GM23248 (cell line): ENCODE measurements at regions of chr12 and their contacts with region 1.

Region 1: DNA sequence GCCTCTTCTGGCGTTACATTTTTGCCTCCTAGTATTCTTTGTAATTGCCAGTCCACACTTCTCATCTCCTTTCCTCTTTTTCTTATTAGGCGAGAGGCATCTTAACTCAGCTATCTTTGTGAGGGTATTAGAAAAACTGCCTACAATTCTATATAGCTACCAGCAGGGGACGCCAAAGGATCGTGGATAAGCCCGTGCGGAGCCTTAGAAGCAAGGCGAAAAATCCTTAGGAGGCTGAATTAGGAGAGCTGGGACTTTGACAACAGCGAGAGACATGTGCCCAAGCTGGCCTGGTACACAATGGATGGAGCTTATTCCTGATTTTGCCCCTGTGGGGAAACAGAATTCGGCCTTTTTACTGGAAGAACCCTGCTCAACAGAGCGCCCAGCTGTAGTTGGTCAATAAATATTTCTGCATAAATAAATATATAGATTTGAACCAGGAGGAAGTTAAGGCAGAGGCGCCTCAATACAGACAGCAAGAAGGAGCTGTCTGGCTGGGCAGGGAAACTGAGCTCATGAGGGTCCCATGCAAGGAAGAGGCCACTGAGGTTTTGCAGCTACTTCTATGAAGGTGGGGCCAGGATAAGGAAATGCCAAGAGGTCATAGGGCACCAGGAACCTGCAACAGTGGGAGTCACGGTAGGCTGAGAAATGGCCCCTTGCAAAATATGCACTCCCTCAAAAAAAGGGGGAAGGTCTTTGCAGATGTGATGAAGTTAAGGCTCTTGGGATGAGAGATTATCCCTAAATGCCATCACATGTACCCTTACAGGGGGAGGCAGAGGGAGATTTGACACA is 14.6 kb upstream of the RBM19 start:
- DNase-seq: peak; percentile 87
- H3K4me3 ChIP-seq: no peak overlapping the region
- H3K27ac ChIP-seq: no peak overlapping the region
- H3K4me1 ChIP-seq: no peaks in the 10 kb centered on the region
- H3K27me3 ChIP-seq: peaks cover 27% of the 10 kb centered on the region

Region 2: GRCh38 chr12:114611145-114612018 is 630.6 kb after region 1 on chr12:
- in situ Hi-C with region 1: no loop called
- DNase-seq: no peak
- H3K4me3 ChIP-seq: no peak overlapping the region
- H3K27ac ChIP-seq: no peak overlapping the region
- H3K4me1 ChIP-seq: no peaks in the 10 kb centered on the region
- H3K27me3 ChIP-seq: peaks cover under 1% of the 10 kb centered on the region; the same call in 1 of the 2 replicates

Region 3: DNA sequence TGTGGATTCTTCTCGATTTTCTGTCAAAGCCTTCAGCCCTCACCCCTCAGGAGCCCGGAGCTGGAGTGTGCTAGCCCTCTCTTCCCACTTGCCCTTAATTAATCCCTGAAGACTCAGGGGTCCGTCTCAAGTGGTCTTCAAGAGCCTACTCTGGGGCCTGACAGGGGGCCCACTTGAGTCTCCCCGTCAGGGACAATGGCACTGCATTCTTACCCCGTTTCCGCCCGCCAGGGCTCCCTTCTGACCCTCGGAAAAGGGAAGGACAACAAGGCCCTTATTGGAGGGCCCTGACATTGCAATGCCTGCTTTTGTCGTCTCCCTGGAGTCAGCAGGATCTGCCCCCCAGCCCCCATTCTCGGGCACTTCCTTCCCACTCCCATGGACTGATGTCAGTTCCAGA is 668.8 kb after region 1 on chr12:
- in situ Hi-C with region 1: loop called (anchors 10 kb)
- DNase-seq: no peak
- H3K4me3 ChIP-seq: no peak overlapping the region
- H3K27ac ChIP-seq: no peak overlapping the region
- H3K4me1 ChIP-seq: no peaks in the 10 kb centered on the region
- H3K27me3 ChIP-seq: peaks cover 4% of the 10 kb centered on the region; the same call in 1 of the 2 replicates

Region 4: DNA sequence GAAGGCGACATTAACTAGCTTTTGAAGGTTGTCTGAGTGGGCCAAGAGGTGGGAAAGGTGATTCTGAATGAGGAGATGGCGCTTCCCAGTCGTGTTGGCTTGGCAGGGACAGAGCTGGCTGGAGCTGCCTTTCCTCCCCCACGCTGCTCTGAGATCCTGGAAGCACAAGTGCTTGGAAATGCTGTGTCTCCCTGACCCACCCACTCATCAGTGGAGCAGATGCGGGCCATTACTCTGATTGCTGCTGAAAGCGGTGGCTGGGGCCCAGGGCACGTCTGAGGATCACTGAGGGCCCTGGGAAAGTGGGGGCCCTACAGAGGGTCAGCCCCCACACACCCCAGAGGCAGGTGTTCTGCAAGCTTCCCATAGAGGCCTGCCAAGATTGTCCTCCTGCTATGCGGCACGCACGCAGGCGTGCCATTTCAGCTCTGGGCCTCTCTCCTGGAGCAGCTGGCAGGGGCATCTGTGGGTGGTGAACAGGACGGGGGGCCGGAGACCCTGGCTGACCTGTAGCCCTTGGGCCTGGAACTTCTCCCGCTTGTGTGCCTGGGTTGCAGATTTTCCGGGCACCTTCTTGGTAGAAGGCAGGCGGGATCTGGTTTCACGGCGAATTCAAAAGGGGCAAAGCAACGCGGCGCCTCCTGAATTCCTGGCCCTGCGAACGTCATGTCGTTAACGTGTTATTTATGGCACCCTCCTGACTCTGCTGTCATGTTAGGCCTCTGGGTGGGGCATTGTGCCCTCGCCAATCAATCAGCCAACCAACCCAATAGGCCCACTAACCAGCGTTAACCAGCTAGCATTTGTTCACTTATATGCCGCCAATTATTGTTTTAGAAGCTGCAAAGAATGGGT is 837.1 kb after region 1 on chr12:
- in situ Hi-C with region 1: no loop called
- DNase-seq: no peak
- H3K4me3 ChIP-seq: no peak overlapping the region
- H3K27ac ChIP-seq: no peak overlapping the region
- H3K4me1 ChIP-seq: no peaks in the 10 kb centered on the region
- H3K27me3 ChIP-seq: no peaks in the 10 kb centered on the region